Activated CD4-positive, alpha-beta T cell treated with anti-CD3 and anti-CD28 coated beads, Interleukin-2, amount 10 ng/mL, durations not matched to agents 24 days and 14 days (primary cell): ENCODE measurements at regions of chr3 and their contacts with region 1.

Region 1: DNA sequence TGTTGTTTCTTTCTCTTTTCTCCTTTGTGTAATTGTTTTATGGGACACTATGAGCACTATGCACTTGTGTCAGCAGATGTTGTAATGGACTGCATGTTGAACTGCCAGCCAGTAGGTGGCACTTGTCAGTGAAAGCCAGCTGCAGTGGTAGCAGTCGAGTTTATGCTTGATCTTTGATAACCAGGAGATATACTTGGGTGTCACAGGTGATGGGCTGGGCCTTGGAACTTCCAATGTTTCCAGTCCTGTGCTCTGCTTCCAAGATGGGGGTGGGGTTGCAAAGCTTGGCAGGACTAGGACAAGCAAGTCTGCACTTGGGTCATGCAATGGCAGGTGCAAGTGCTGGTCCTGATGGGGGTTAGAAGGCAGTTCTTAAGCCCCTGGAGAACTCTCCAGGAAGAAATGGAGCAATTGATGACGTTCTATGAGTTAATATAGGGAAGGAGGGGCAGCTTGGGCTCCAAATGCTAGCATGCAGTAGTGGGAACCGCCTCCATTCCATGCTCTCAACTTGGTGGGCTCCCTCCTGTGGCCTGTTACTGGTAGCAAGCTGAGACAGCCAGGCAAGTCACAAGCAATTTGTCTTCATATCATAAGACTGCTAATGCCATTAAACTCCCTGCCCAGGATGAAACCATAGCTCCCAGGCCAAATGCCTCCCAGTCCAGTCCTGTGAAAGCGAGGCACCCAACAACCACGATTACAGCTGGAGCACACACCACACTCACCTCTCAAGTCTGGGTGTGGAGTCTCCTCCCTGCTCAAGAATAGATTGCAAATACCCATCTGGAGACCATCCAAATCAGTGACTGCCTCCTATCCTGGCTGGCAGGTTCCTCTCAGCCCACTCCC is 287.2 kb downstream of the CGGBP1 start:
- DNase-seq: peak; percentile 78
- H3K4me3 Mint-ChIP-seq: no peak overlapping the region
- H3K27ac Mint-ChIP-seq: no peak overlapping the region
- H3K4me1 Mint-ChIP-seq: peaks cover 3% of the 10 kb centered on the region
- H3K27me3 Mint-ChIP-seq: peaks cover 19% of the 10 kb centered on the region

Region 2: DNA sequence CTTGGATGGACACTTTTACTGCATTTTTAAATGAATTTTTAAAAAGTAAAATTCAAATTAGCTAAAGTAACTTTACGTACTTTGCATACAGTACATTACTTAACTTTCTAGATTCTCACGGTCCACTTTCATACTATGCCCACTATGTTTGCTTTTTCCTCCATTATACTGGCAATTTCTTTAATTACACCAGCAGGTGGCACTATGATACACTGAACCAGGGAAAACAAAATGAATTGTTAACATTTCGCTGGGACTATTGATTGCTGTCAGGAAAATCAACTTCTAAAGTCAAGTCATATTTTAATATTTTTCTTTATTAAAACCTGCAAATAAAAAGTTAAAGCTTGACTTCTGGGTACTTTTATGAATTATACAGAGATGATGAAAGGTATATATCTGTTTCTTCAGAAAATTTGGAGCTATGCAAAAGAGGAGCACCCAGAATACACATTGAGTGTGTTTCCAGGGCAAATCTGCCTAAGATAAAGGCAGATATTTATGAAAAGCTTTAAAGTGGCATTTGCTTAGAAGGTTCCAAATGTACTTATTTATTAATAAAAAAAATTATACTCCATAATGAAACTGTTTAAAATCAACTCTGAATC is 473.4 kb before region 1 on chr3:
- intact Hi-C with region 1: loop called (anchors 10 kb)
- DNase-seq: no peak
- H3K4me3 Mint-ChIP-seq: no peak overlapping the region
- H3K27ac Mint-ChIP-seq: no peak overlapping the region
- H3K4me1 Mint-ChIP-seq: no peaks in the 10 kb centered on the region
- H3K27me3 Mint-ChIP-seq: peaks cover 2% of the 10 kb centered on the region

Region 3: GRCh38 chr3:88113311-88114162 is 342.0 kb after region 1 on chr3:
- intact Hi-C with region 1: loop called (anchors 1 kb)
- DNase-seq: peak; percentile 88
- H3K4me3 Mint-ChIP-seq: no peak overlapping the region
- H3K27ac Mint-ChIP-seq: no peak overlapping the region
- H3K4me1 Mint-ChIP-seq: peaks cover 19% of the 10 kb centered on the region
- H3K27me3 Mint-ChIP-seq: no peaks in the 10 kb centered on the region

Region 4: DNA sequence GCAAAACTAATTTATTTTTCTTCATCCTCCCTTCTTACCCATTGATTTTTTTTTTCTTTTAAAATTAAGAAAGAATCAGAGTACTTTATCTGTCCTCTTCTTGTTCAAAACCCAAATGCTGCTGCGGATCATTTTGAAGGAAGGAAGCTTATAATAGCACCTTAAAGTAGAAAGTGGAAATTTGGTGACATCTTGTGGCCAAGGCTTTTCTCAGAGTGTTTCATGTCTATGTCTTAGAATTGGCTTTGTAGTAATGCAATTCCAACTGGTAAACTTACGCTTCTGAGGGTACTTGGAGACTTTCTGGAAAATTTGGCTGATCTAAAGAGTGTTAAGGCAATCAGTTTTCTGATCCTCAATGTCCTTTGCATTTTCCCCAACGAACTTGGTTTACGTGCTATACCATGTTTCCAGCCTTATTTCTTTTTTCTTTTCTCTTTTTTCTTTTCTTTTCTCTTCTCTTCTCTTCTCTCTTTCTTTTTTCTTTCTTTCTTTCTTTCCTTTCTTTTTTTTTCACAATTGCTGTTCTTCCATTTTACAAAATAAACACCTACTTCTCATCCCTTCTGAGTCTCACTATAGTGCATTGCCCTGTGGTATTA is 408.9 kb after region 1 on chr3:
- intact Hi-C with region 1: loop called (anchors 1 kb)
- DNase-seq: peak; percentile 80
- H3K4me3 Mint-ChIP-seq: no peak overlapping the region
- H3K27ac Mint-ChIP-seq: no peak overlapping the region
- H3K4me1 Mint-ChIP-seq: no peaks in the 10 kb centered on the region
- H3K27me3 Mint-ChIP-seq: peaks cover 15% of the 10 kb centered on the region